Transverse colon (tissue), 4 donors: ENCODE measurements at regions of chr1 and their contacts with region 1.

Region 1: DNA sequence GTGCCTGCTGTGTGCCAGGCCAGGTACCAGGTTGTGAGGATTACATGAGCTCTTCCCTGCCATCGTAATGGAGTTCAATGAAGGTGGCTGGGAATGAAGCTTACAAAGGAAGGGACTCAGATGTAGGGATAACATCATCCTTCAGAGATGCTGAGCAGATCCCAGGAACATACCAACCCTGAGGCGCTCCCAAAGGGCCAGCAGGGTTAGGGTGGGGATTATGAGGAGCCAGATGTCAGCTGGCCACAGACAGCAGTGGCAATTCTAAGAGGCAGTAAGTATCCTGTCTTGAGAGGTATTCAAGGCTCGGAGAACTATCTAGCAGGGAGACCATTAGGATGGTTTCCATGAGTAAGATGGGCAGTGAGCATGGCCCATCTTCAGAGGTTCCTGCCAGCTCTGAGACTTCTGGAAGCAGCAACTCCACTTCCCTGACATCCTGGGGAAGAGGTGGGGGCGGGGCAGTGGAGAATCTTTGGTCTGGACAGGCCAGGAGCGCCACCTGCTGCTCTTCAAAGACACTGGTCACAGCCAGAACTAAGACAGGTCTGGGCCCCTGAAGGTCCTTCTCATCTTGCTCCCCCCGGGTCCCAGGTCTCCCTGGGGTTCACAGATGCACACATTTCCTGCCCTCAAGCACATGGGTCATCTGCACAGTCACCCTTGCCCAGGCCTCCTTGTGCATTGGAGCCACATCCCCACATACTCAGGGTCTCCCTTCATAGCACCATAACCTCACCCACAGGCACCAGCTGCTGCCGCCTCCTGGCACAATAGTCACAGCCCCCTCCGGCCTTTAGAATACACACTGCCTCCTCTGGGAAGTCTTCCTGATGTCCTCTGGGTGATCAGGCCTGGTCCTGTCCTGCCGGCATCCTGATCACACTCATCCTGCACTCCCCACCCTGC is 2.7 kb upstream of the SDC3 start:
- DNase-seq: peak; percentile 90
- H3K4me3 ChIP-seq: no peak overlapping the region
- H3K27ac ChIP-seq: peak overlapping the region in 3 of 4 donors; percentile 26 to 58 (median 27)
- H3K4me1 ChIP-seq: peaks cover 9 to 33% (median 19%) of the 10 kb centered on the region in 4 donors
- H3K27me3 ChIP-seq: peaks cover 5% of the 10 kb centered on the region
- CTCF ChIP-seq: peak; percentile 81 to 93 (median 84)
- EP300 ChIP-seq: no peak
- POLR2A ChIP-seq: no peak

Region 2: DNA sequence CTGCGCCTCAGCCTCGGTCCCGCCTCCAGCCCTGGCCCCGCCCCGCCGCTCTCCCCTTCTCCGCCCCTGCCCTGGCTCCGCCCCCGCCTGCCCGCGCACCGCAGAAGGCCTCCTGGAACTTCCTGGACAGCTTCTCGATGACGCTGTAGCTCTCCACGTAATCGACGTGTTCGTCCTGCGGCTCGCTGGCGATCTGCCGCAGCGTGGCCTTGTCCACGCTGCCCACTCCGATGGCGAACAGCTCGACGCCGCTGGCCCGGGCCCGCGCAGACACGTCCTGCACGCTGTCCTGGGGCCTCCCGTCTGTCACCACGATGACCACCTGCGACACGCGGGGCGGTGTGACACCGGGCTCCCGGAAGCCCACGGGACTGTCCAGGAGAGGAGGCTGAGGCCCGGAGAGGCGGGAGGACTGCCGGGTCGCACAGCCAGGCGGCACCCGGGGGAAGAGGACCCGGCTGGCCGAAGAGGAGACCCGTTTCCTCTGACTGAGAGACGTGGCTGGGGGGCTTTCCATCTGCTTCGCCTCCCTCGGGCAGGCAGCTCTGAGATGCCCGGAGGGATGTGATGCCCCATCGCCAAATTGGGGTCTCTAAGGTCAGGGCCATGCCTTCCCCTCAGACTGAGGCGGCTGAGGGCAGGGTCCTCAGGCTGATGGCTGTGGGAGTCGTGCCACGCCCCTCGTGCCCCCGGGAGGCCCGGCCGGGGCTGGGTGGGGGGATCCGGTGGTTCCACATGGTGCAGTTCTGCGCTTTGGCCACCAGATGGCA is 192.5 kb before region 1 on chr1:
- in situ Hi-C with region 1: loop called in 2 of 4 experiments (anchors 10 kb)
- intact Hi-C with region 1: no loop called
- DNase-seq: peak; percentile 85
- H3K4me3 ChIP-seq: peak overlapping the region; percentile 25 to 57 (median 44)
- H3K27ac ChIP-seq: peak overlapping the region; percentile 94 to 99 (median 98)
- H3K4me1 ChIP-seq: peaks cover 5 to 15% (median 10%) of the 10 kb centered on the region in 4 donors
- H3K27me3 ChIP-seq: no peaks in the 10 kb centered on the region
- CTCF ChIP-seq: peak; percentile 99 to 100 (median 99)
- EP300 ChIP-seq: peak; percentile 53
- POLR2A ChIP-seq: peak; percentile 93

Region 3: GRCh38 chr1:30801771-30802198 is 109.5 kb before region 1 on chr1:
- in situ Hi-C with region 1: loop called (anchors 5 kb)
- intact Hi-C with region 1: loop called (anchors 1 kb)
- DNase-seq: peak; percentile 82
- H3K4me3 ChIP-seq: no peak overlapping the region
- H3K27ac ChIP-seq: peak overlapping the region in 2 of 4 donors; percentile 32 to 44
- H3K4me1 ChIP-seq: peaks cover 0 to 13% (median 8%) of the 10 kb centered on the region in 4 donors
- H3K27me3 ChIP-seq: peaks cover 4% of the 10 kb centered on the region
- CTCF ChIP-seq: peak; percentile 93 to 97 (median 95)
- EP300 ChIP-seq: no peak
- POLR2A ChIP-seq: no peak